K562 (cell line): ENCODE measurements at regions of chr9 and their contacts with region 1.

Region 1: DNA sequence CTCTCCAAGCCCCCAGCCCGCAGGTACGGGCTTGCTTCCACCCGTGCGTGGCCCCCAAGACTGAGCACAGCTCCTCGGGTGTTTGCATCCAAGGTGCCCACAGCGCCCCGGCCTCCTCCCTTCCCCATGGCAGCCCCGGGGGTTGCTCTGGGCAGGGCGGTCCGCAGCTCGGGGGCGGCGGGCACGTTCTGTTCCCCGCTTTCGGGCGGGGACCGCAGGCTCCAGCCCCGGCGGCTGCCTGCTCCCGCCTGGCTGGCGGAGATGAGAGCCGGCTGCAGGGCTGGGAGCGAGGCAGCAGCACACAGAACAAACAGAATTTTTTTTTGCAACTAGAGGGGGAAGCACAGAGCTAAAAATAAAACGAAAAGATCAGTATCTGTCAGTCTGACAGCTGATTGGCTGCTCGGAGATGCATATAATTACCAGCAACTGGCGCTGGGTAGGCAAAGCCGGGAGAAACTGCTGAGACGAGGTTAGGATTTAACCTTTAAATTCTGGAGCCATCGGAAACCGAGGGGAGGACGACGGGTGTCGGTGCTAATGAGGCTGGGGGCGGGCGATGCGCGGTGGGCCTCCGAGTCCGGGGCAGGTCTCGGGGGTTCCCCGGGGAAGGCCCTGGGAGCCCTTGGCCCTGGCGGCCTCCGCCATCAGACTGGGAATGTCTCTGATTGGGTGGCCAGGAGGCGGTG is 142.7 kb upstream of the IER5L start:
- DNase-seq: peak; percentile 53 to 63 (median 58)
- ATAC-seq: peak; percentile 87
- H3K4me3 ChIP-seq: no peak overlapping the region
- H3K27ac ChIP-seq: peak overlapping the region; percentile 34; the same call in 1 of the 3 replicates
- H3K4me1 ChIP-seq: peaks cover 14 to 27% of the 10 kb centered on the region in 2 experiments
- H3K27me3 ChIP-seq: 0 out of 5 replicates have a peak, but pooled peaks cover 0 to 3% of the 10 kb centered on the region in 2 experiments
- CTCF ChIP-seq: peak in 2 of 3 experiments; percentile 4 to 39; a peak in 2 of 6 replicates
- EP300 ChIP-seq: no peak
- POLR2A ChIP-seq: no peak
- RAD21 ChIP-seq: peak in 1 of 2 experiments; percentile 45; a peak in 3 of 4 replicates

Region 2: GRCh38 chr9:129131300-129132145 is 189.2 kb before region 1 on chr9:
- CTCF ChIA-PET with region 1: no interaction called
- POLR2A ChIA-PET with region 1: no interaction called
- in situ Hi-C with region 1: no loop called
- intact Hi-C with region 1: no loop called
- DNase-seq: peak; percentile 83 to 89 (median 84)
- ATAC-seq: peak; percentile 99
- H3K4me3 ChIP-seq: no peak overlapping the region
- H3K27ac ChIP-seq: no peak overlapping the region
- H3K4me1 ChIP-seq: peaks cover 0 to 9% of the 10 kb centered on the region in 2 experiments; a peak in 2 of 5 replicates
- H3K27me3 ChIP-seq: no peaks in the 10 kb centered on the region
- CTCF ChIP-seq: peak; percentile 93 to 98 (median 95)
- EP300 ChIP-seq: 0 out of 2 replicates have a peak, but pooled peaks have one; percentile 21
- POLR2A ChIP-seq: no peak
- RAD21 ChIP-seq: peak; percentile 77 to 84

Region 3: GRCh38 chr9:129282272-129283211 is 38.2 kb before region 1 on chr9:
- CTCF ChIA-PET with region 1: no interaction called
- POLR2A ChIA-PET with region 1: no interaction called
- in situ Hi-C with region 1: no loop called
- intact Hi-C with region 1: loop called (anchors 2 kb)
- DNase-seq: no peak
- ATAC-seq: no peak
- H3K4me3 ChIP-seq: no peak overlapping the region
- H3K27ac ChIP-seq: no peak overlapping the region
- H3K4me1 ChIP-seq: peaks cover 0 to 36% of the 10 kb centered on the region in 2 experiments; a peak in 3 of 5 replicates
- H3K27me3 ChIP-seq: no peaks in the 10 kb centered on the region
- CTCF ChIP-seq: no peak
- EP300 ChIP-seq: no peak
- POLR2A ChIP-seq: no peak
- RAD21 ChIP-seq: no peak

Region 4: DNA sequence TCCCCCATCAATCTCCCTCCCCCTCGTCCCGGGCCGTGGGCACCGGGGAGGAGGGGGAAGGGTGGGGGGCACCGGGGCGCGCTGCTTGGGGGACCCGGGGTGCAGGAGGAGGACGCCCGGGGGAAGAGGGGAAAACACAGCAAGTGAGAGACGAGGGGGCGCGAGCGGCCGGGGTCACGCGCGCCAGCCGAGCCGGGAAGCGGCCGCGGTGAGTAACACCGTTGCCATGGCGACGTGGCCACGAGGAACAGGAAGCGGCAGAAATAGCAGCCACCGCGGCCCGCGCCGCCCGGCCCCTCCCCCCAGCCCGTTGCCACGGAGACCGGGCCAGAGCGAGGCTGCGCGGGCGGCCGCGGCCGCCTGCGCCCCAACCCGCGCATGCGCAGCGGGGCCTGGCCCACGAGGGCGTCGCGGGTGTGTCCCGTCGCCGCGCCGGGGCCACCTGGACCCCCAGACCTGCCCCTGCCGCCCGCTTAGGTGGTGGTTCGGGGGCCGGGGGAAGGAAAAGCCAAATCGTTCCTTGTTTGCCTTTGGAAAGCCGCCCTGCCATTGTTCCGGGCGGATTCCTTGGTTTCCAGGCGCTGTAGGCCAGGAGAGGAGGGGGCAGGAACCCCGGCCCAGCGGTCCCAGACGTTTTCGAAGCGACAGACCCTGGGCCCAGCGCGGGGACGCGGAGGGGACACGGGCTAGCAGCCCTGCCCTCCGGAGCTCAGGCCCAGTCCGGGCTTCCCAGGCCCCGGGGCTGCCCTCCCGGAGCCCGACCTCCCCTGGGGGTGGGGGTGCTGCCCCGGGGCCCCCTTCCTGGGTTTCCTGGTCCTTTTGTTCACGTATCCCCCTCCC is 93.0 kb after region 1 on chr9:
- CTCF ChIA-PET with region 1: no interaction called
- POLR2A ChIA-PET with region 1: no interaction called
- in situ Hi-C with region 1: no loop called
- intact Hi-C with region 1: no loop called
- DNase-seq: peak; percentile 96 to 98 (median 96)
- ATAC-seq: peak; percentile 87
- H3K4me3 ChIP-seq: peak overlapping the region; percentile 53
- H3K27ac ChIP-seq: peak overlapping the region; percentile 99
- H3K4me1 ChIP-seq: peaks cover 45 to 55% of the 10 kb centered on the region in 2 experiments
- H3K27me3 ChIP-seq: no peaks in the 10 kb centered on the region
- CTCF ChIP-seq: no peak
- EP300 ChIP-seq: peak; percentile 57; the same call in 1 of the 2 replicates
- POLR2A ChIP-seq: peak; percentile 72
- RAD21 ChIP-seq: no peak

Region 5: DNA sequence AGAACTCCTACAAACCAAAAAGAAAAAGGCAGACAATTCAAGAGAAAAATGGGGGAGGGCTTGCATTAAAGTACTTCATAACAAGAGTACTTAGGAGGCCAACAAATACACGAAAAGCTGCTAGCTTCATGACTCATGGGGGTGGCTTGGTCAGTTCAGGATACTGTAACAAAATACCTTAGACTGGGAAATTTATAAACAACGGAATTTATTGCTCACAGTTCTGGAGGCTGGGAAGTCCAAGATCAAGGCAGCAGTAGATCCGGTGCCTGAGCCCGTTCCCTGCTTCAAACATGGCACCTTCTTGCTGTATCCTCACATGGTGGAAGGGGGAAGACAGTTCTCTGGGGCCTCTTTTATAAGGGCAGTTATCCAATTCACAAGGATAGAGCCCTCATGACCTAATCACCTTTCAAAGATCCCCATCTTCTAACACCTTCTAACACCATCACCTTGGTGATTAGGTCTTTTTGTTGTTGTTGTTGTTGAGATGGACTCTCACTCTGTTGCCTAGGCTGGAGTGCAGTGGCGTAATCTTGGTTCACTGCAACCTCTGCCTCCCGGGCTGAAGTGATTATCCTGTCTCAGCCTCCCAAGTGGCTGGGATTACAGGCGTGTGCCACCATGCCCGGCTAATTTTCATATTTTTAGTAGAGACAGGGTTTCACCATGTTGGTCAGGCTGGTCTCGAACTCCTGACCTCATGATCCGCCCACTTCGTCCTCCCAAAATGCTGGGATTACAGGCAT is 189.0 kb after region 1 on chr9:
- CTCF ChIA-PET with region 1: no interaction called
- POLR2A ChIA-PET with region 1: no interaction called
- in situ Hi-C with region 1: no loop called
- intact Hi-C with region 1: no loop called
- DNase-seq: no peak
- ATAC-seq: no peak
- H3K4me3 ChIP-seq: no peak overlapping the region
- H3K27ac ChIP-seq: no peak overlapping the region
- H3K4me1 ChIP-seq: peaks cover 3 to 14% of the 10 kb centered on the region in 2 experiments; a peak in 2 of 5 replicates
- H3K27me3 ChIP-seq: no peaks in the 10 kb centered on the region
- CTCF ChIP-seq: no peak
- EP300 ChIP-seq: no peak
- POLR2A ChIP-seq: no peak
- RAD21 ChIP-seq: no peak